Head of caudate nucleus (tissue), 42 donors: ENCODE measurements at regions of chr11 and their contacts with region 1.

Region 1: GRCh38 chr11:65779851-65780577 is 762 bp downstream of the AP5B1 start:
- DNase-seq: peak; percentile 26 to 88 (median 76)

Region 2: GRCh38 chr11:65817835-65818742 is 38.1 kb after region 1 on chr11:
- intact Hi-C with region 1: loop called (anchors 5 kb)
- DNase-seq: peak; percentile 87 to 99 (median 95)